IMR-90 (cell line): ENCODE measurements at regions of chr15 and their contacts with region 1.

Region 1: DNA sequence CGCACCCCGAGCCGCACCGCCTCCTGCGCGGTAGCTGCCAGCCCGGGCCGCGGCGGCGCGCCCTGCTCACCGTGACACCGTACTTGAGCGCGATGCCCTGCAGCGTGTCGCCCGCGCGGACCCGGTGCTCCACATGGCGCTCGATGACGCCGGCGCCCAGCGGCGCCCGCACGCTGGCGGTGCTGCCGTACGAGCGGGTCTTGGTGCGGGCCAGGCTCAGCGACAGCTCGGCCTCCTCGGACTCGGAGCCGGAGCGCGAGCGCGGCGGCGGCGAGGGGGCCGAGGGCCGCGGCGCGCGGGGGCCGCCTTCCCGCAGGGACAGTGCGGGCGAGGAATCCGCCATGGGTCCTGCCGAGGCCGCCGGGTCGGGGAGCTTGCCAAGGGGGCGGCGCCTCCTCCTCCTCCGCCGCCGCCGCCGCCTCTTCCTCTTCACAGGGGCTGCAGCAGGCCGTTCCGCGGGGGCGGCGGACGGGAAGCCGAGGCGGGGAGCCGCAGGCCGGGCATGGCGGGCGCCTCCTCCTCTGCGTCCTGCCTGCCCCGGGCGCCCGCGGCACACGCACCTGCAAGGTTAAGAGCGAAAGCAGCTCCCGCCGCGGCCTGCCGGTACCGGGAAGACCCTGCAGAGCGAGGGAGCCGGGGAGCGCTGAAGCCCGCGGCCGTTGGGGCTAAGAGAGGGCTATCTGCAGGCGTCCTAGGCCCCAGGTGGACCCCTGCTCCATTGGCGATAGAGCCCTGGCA is at the start of gene LYSMD2:
- DNase-seq: peak; percentile 36
- ATAC-seq: peak; percentile 90
- H3K4me3 ChIP-seq: peak within 1 kb of the TSS; percentile 98
- H3K27ac ChIP-seq: peak within 1 kb of the TSS; percentile 18; the same call in 1 of the 2 replicates
- H3K4me1 ChIP-seq: peaks cover 6% of the 10 kb centered on the region; the same call in 1 of the 2 replicates
- H3K27me3 ChIP-seq: no peaks in the 10 kb centered on the region
- CTCF ChIP-seq: no peak
- POLR2A ChIP-seq: no peak
- RAD21 ChIP-seq: no peak
- total RNA-seq, gene LYSMD2: 5.9 and 7.2 TPM in 2 replicates

Region 2: DNA sequence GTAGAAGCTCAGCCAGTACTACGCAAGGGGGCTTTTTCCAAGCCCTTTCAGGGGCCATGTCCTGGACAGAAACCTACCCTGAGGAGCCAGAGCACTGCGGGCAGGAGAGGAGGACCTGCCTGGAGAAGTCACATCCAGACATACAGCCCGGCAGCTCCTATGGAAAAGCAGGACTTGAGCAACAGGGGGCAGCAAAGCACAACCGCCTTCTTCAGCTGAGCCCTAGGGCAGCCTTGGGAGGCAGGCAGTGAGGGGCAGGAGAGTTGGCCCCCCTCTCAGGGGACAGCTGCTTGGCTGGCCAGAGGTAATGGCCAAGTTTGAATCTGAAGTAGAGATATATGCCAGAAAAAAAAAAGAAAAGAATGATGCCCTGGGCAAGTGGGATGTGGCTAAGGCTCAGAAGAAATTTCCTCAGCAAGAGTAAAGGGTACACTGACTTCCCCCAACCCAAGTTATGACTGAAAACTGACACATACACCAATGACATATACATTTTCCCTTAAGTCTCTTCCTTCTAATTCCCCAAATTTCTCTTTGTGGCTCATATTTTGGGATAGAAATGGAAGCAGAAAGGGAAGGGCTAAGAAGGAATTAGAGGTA is 456.0 kb before region 1 on chr15:
- CTCF ChIA-PET with region 1: no interaction called
- POLR2A ChIA-PET with region 1: no interaction called
- dilution Hi-C with region 1: no loop called
- in situ Hi-C with region 1: no loop called
- intact Hi-C with region 1: no loop called
- DNase-seq: peak; percentile 53
- ATAC-seq: peak; percentile 99
- H3K4me3 ChIP-seq: no peak overlapping the region
- H3K27ac ChIP-seq: no peak overlapping the region
- H3K4me1 ChIP-seq: no peaks in the 10 kb centered on the region; the same call in 1 of the 2 replicates
- H3K27me3 ChIP-seq: peaks cover 50% of the 10 kb centered on the region
- CTCF ChIP-seq: peak; percentile 82
- POLR2A ChIP-seq: no peak
- RAD21 ChIP-seq: peak; percentile 87

Region 3: DNA sequence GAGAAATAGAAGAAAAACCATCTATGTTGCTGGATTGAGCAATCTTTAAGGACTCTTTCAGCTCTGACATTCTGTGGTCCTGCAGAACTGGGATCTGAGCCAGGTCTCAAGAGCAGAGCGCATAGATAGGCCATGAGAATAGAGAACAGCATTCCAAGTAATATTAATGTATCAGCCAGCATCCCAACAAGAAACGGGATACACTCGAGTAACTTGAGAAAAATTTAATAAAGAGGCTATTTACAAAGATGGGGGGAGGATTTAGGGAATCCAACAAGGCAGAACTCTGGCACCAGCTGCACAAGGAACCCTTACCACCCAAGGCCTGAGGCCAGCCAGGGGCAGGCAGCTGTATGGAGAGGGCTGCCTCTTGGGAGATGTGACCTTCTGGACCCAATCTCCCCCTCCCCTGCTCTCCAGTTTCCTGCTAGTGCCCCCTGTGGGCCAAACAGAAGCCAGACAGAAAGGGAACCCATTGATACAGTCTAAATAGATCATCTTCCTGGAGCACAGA is 22.2 kb after region 1 on chr15:
- CTCF ChIA-PET with region 1: interaction called, 3 read pairs
- POLR2A ChIA-PET with region 1: no interaction called
- dilution Hi-C with region 1: no loop called
- in situ Hi-C with region 1: no loop called
- intact Hi-C with region 1: loop called (anchors 2 kb)
- DNase-seq: peak; percentile 97
- ATAC-seq: peak; percentile 93
- H3K4me3 ChIP-seq: no peak overlapping the region
- H3K27ac ChIP-seq: peak overlapping the region; percentile 34; the same call in 1 of the 2 replicates
- H3K4me1 ChIP-seq: peaks cover 9% of the 10 kb centered on the region
- H3K27me3 ChIP-seq: no peaks in the 10 kb centered on the region
- CTCF ChIP-seq: 0 out of 2 replicates have a peak, but pooled peaks have one; percentile 7
- POLR2A ChIP-seq: no peak
- RAD21 ChIP-seq: no peak

Region 4: DNA sequence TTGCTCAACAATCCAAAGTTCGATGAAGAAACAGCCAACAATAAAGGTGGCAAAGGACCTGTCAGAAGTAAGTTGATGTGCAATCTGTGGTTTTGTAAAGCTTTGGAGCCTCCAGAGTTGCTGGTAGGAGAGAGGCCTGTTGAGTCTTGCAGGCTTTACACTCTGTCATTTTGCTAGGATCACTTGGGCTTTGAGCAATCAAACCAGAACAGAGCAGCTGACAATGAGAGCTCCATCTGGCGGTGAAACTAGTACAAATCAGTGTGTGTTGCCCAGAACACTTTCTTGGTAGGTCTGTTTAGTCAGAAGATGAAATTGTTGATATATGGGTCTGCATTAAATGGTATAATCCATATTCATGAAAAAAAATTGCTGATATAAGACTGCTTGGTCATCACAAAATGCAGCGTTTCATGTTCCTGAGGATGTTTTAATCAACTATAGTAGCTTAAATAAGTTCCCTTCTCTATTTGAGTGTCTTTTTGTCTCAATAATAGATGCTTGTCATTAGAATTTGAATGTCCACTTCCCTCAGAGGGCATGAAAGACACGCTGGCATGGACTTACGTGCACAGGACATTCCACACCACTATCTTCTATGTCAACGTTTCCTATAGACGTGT is 39.6 kb after region 1 on chr15:
- CTCF ChIA-PET with region 1: interaction called, 16 read pairs
- POLR2A ChIA-PET with region 1: no interaction called
- dilution Hi-C with region 1: no loop called
- in situ Hi-C with region 1: no loop called
- intact Hi-C with region 1: no loop called
- DNase-seq: peak; percentile 77
- ATAC-seq: peak; percentile 87
- H3K4me3 ChIP-seq: no peak overlapping the region
- H3K27ac ChIP-seq: no peak overlapping the region
- H3K4me1 ChIP-seq: no peaks in the 10 kb centered on the region
- H3K27me3 ChIP-seq: no peaks in the 10 kb centered on the region
- CTCF ChIP-seq: peak; percentile 72
- POLR2A ChIP-seq: no peak
- RAD21 ChIP-seq: peak; percentile 71